ENCODE measurements at regions of chr16 and their contacts with region 1.

Region 1: DNA sequence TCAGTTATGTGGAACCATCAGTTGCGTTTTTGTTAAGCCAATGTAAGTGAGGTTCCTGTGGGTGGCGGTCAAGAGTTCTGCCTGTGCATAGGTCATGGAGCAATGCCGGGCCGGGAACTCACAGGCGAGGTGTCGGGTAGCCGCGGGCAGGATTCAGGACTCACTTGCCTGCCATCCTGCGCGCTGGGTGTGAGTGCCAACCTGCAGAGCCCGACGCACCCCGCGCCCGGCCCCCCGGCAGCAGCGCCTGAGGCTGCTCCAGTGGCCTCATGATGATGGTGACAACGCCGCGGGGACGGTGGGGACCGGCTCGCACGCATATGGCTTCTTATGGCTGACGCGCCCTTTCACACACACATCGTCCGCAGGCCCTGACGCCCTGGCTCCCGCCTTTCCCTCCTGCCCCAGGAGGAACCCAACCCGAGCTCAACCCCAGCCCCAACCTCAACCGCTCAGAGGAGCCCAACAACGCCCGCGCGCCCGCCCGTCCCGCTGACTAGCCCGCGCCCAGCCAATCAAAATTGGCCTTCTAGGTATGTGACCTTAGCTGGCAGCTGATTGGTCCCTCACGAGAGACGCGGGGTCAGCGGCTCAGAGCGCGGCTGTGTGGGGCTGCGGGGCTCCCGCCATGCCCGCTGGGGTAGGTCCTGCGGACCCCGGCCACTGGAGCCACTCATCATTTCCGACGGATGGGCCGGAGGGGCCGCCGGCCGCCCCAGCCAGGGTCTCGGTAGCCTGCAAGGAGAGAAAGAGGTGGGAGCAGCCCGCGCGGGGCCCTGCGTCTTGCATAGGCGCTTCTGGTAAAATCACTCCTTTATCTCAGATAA is at the start of gene C16orf95:
- DNase-seq: peak; percentile 96 to 97 (median 97)
- ATAC-seq: peak; percentile 97 to 99 (median 98)
- H3K4me3 ChIP-seq: peak within 1 kb of the TSS; percentile 67 to 100 (median 85)
- H3K27ac ChIP-seq: peak within 1 kb of the TSS; percentile 79 to 97 (median 91)
- H3K4me1 ChIP-seq: peaks cover 0 to 15% (median 8%) of the 10 kb centered on the region in 12 donors
- H3K27me3 ChIP-seq: no peaks in the 10 kb centered on the region
- CTCF ChIP-seq: peak; percentile 37 to 77 (median 64)
- POLR2A ChIP-seq: peak; percentile 32 to 91
- total RNA-seq, gene C16orf95: 0.91 to 4.5 (median 3.3) TPM

Region 2: DNA sequence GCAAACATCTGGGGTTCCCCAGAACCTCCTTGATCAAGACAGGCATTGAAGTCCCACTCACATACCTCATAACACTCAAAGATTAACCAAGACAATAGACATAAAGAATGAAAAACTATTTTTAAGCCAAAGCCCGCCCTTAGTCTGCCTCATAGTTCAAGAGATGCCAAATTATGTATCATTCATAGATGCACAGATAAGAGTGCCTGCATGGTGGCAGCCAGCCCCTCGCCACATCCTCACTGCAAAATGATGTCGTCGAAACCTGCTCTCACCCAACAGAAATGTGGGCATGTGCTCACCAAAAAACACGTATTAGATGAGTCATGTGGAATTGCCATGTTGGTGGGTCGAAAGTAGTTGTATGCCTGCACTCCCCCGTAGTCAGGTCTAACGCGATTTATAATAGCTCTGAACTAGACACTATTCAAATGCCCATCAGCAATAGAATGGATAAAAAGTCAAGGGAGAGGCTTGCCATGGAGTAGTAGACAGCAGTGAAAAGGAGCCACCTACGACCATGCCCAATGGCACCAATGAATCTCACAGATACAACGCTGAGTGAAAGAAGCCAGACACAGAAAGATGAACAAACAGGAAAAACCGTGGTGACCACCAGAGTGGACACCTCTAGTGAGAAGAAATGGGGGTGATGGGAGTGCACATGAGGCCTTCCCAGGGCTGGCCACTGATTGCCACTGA is 64.7 kb before region 1 on chr16:
- intact Hi-C with region 1: no loop called
- DNase-seq: no peak
- ATAC-seq: no peak
- H3K4me3 ChIP-seq: no peak overlapping the region
- H3K27ac ChIP-seq: no peak overlapping the region
- H3K4me1 ChIP-seq: no peaks in the 10 kb centered on the region
- H3K27me3 ChIP-seq: no peaks in the 10 kb centered on the region
- CTCF ChIP-seq: no peak
- POLR2A ChIP-seq: no peak

Region 3: GRCh38 chr16:87363771-87364455 is 46.8 kb after region 1 on chr16:
- intact Hi-C with region 1: loop called in 1 of 10 experiments (anchors 5 kb)
- DNase-seq: peak; percentile 51 to 66 (median 57)
- ATAC-seq: peak; percentile 84 to 90 (median 84)
- H3K4me3 ChIP-seq: peak overlapping the region in 6 of 12 donors; percentile 1 to 27 (median 19)
- H3K27ac ChIP-seq: peak overlapping the region; percentile 48 to 88 (median 76)
- H3K4me1 ChIP-seq: peaks cover 3 to 89% (median 35%) of the 10 kb centered on the region in 12 donors
- H3K27me3 ChIP-seq: peaks cover 0 to 29% (median 0%) of the 10 kb centered on the region in 9 donors
- CTCF ChIP-seq: no peak
- POLR2A ChIP-seq: no peak

Measured in heart left ventricle (tissue), 16 donors.